Naive thymus-derived CD4-positive, alpha-beta T cell (primary cell): ENCODE measurements at regions of chr4 and their contacts with region 1.

Region 1: DNA sequence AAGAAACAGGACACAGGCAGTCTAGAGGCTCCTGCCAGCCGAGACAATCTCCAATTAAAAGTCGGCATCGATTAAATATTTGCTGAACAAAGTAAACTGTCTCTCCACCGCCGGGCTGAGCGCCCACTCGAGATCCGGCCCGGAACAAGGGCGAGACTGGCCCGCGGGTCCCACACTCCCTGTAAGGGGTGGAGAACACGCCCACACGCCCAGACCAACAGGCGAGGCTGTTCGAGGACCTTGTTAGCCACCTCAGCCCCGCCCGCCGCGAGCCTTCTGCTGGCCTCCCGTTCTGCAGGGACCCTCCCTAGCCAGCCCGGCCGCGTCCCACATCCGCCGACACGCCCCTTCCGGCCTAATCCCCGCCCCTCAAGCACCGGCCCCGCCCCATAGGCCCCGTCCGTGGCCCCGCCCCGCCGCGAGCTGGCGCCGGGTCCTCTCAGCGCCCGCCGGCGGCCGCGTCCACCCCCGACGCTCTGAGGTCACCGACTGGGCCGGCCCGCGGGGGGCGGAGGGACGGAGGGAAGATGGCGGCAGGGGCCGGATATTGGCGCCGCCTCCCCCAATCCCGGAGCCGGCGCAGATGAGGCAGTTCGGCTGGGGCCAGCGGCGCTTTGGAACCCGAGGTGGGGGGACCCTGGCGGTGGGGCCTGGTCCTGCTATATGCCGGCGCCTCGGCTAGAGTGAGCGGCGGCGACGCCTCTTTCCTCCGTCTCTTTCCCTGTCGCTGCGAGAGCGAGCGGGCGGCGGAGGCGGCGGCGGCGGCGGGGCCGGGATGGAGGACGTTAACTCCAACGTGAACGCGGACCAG is at the start of gene SLAIN2:
- DNase-seq: peak; percentile 91 to 100 (median 96)
- ATAC-seq: peak; percentile 93
- H3K4me3 ChIP-seq: peak within 1 kb of the TSS; percentile 76
- H3K4me3 Mint-ChIP-seq: peak within 1 kb of the TSS; percentile 81 to 99 (median 96)
- H3K27ac ChIP-seq: peak within 1 kb of the TSS; percentile 91
- H3K27ac Mint-ChIP-seq: peak within 1 kb of the TSS; percentile 91 to 98 (median 96)
- H3K4me1 ChIP-seq: peaks cover 17 to 20% of the 10 kb centered on the region in 2 donors
- H3K4me1 Mint-ChIP-seq: peaks cover 40 to 54% (median 45%) of the 10 kb centered on the region in 7 donors
- H3K27me3 ChIP-seq: no peaks in the 10 kb centered on the region
- H3K27me3 Mint-ChIP-seq: no peaks in the 10 kb centered on the region
- total RNA-seq, gene SLAIN2: 53.2 to 87.5 (median 77.2) TPM

Region 2: GRCh38 chr4:47463235-47463956 is 877.8 kb before region 1 on chr4 and contains the start of gene COMMD8:
- CTCF ChIA-PET with region 1: interaction called, 3 read pairs
- POLR2A ChIA-PET with region 1: no interaction called
- intact Hi-C with region 1: loop called (anchors 1 kb)
- DNase-seq: peak; percentile 91 to 97 (median 95)
- ATAC-seq: peak; percentile 93
- H3K4me3 ChIP-seq: peak within 1 kb of the TSS; percentile 82
- H3K4me3 Mint-ChIP-seq: peak within 1 kb of the TSS; percentile 77 to 93 (median 90)
- H3K27ac ChIP-seq: peak within 1 kb of the TSS; percentile 74
- H3K27ac Mint-ChIP-seq: peak within 1 kb of the TSS; percentile 76 to 97 (median 95)
- H3K4me1 ChIP-seq: peaks cover 9 to 17% of the 10 kb centered on the region in 2 donors
- H3K4me1 Mint-ChIP-seq: peaks cover 20 to 48% (median 38%) of the 10 kb centered on the region in 7 donors
- H3K27me3 ChIP-seq: no peaks in the 10 kb centered on the region
- H3K27me3 Mint-ChIP-seq: no peaks in the 10 kb centered on the region
- total RNA-seq, gene COMMD8: 8.4 to 19.3 (median 16.7) TPM

Region 3: GRCh38 chr4:48016141-48017103 is 324.7 kb before region 1 on chr4 and contains the starts of genes CNGA1 and NIPAL1:
- CTCF ChIA-PET with region 1: no interaction called
- POLR2A ChIA-PET with region 1: no interaction called
- intact Hi-C with region 1: loop called (anchors 5 kb)
- DNase-seq: peak; percentile 56 to 79 (median 65)
- ATAC-seq: peak; percentile 96
- H3K4me3 ChIP-seq: peak within 1 kb of the TSS; percentile 75
- H3K4me3 Mint-ChIP-seq: peak within 1 kb of the TSS; percentile 78 to 95 (median 86)
- H3K27ac ChIP-seq: peak within 1 kb of the TSS; percentile 17
- H3K27ac Mint-ChIP-seq: peak within 1 kb of the TSS in 5 of 9 donors; percentile 7 to 91 (median 50)
- H3K4me1 ChIP-seq: peaks cover 0 to 8% of the 10 kb centered on the region in 2 donors
- H3K4me1 Mint-ChIP-seq: peaks cover 6 to 12% (median 10%) of the 10 kb centered on the region in 7 donors
- H3K27me3 ChIP-seq: no peaks in the 10 kb centered on the region
- H3K27me3 Mint-ChIP-seq: peaks cover 3 to 32% (median 11%) of the 10 kb centered on the region in 5 donors
- total RNA-seq, gene CNGA1: not detected
- total RNA-seq, gene NIPAL1: 0.45 to 3.3 (median 1.9) TPM in 4 of 5 experiments, not detected in the other

Region 4: DNA sequence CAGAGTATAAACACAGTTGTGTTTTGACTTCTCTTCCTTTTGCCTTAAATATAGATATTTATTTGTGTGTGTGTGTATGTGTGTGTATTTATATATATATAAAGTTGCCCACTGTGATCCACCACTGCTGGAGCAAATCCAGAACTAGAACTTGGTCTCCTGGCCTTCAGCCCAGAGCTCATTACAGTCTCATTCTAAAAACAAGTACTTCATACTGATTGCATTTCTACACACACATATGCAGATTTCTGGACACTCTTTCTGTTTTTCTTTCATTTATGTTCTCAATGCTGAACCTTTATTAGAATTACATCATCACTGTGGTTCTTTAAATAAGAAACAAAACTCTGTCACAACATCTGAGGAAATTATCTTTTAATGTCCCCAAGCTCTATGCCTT is 207.5 kb before region 1 on chr4:
- CTCF ChIA-PET with region 1: interaction called, 3 read pairs
- POLR2A ChIA-PET with region 1: interaction called, 10 read pairs
- intact Hi-C with region 1: loop called (anchors 1 to 2 kb)
- DNase-seq: no peak
- ATAC-seq: no peak
- H3K4me3 ChIP-seq: peak overlapping the region; percentile 61
- H3K4me3 Mint-ChIP-seq: peak overlapping the region in 9 of 10 donors; percentile 91 to 99 (median 94)
- H3K27ac ChIP-seq: peak overlapping the region; percentile 79
- H3K27ac Mint-ChIP-seq: peak overlapping the region in 7 of 9 donors; percentile 82 to 97 (median 93)
- H3K4me1 ChIP-seq: peaks cover 65 to 68% of the 10 kb centered on the region in 2 donors
- H3K4me1 Mint-ChIP-seq: peaks cover 47 to 83% (median 75%) of the 10 kb centered on the region in 7 donors
- H3K27me3 ChIP-seq: no peaks in the 10 kb centered on the region
- H3K27me3 Mint-ChIP-seq: no peaks in the 10 kb centered on the region

Region 5: DNA sequence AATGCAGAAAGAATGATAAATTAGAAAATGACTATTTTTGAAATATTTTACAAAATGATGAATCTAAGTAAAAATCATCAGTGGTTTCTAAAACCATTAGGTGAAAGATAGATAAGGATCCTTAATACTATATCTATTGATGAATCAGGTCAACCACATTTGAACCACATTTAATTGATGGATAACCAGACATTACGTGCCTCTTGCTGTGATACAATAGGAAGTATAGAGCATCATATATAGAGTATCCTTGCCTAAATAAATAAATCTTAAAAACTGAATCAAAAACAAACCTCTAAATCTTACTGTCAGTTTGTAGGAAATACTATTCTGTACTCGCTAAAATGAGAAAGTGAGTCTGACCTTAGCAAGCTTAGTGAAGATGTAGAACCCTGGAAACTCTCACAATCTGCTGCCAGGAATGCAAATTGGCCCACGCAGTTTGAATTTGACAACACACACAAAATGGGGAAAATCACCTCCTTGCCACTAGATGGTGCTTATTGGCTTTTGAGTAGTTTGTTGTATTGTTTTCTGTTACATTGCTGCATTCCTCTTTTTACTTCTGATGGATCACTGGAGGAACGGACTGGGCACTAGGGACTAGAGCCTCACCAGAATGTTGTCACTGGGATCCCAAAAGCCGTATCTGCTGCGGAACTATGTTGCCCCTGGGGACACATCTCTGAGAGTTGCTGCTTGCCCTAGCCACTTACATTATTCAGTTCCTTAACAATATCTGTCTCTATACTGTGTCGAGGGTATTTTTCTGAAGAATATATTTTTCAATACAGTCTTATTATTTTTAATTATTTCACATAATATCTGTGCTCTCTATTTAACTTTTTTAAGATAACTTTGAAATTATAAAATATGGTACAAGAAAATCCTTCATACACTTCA is 25.2 kb before region 1 on chr4:
- CTCF ChIA-PET with region 1: no interaction called
- POLR2A ChIA-PET with region 1: no interaction called
- intact Hi-C with region 1: loop called (anchors 1 kb)
- DNase-seq: peak in 7 of 9 donors; percentile 13 to 53 (median 33)
- ATAC-seq: peak; percentile 61
- H3K4me3 ChIP-seq: no peak overlapping the region
- H3K4me3 Mint-ChIP-seq: no peak overlapping the region
- H3K27ac ChIP-seq: no peak overlapping the region
- H3K27ac Mint-ChIP-seq: peak overlapping the region in 1 of 9 donors; percentile 46
- H3K4me1 ChIP-seq: no peaks in the 10 kb centered on the region
- H3K4me1 Mint-ChIP-seq: peaks cover 0 to 5% (median 0%) of the 10 kb centered on the region in 7 donors
- H3K27me3 ChIP-seq: no peaks in the 10 kb centered on the region
- H3K27me3 Mint-ChIP-seq: peaks cover 0 to 6% (median 0%) of the 10 kb centered on the region in 5 donors

Region 6: GRCh38 chr4:48429709-48430474 is 88.7 kb after region 1 on chr4:
- CTCF ChIA-PET with region 1: no interaction called
- POLR2A ChIA-PET with region 1: no interaction called
- intact Hi-C with region 1: loop called in 1 of 2 experiments (anchors 2 kb)
- DNase-seq: no peak
- ATAC-seq: no peak
- H3K4me3 ChIP-seq: no peak overlapping the region
- H3K4me3 Mint-ChIP-seq: peak overlapping the region in 1 of 10 donors; percentile 57
- H3K27ac ChIP-seq: no peak overlapping the region
- H3K27ac Mint-ChIP-seq: peak overlapping the region in 1 of 9 donors; percentile 63
- H3K4me1 ChIP-seq: peaks cover 0 to 16% of the 10 kb centered on the region in 2 donors
- H3K4me1 Mint-ChIP-seq: peaks cover 26 to 56% (median 41%) of the 10 kb centered on the region in 7 donors
- H3K27me3 ChIP-seq: no peaks in the 10 kb centered on the region
- H3K27me3 Mint-ChIP-seq: peaks cover 0 to 3% (median 0%) of the 10 kb centered on the region in 5 donors

Region 7: DNA sequence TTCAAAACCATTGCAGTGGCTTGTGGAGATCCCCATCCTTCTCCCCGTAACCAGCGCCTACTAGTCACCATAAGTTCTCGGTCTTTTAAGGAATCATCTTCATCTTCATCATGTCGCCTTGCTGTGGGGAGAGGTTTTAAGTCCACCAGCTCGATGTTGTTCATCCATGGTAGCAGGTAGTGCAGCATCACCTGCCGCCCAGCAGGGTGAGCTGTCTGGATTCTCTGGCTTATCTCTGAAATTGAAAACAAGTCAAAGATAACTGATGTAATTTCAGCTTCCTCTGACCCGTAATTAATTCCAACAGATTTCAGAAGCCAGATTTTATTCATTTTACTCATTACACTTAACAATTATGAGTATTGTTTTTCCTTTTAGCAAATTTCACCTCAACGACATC is 216.3 kb after region 1 on chr4:
- CTCF ChIA-PET with region 1: no interaction called
- POLR2A ChIA-PET with region 1: no interaction called
- intact Hi-C with region 1: no loop called
- DNase-seq: no peak
- ATAC-seq: no peak
- H3K4me3 ChIP-seq: no peak overlapping the region
- H3K4me3 Mint-ChIP-seq: no peak overlapping the region
- H3K27ac ChIP-seq: no peak overlapping the region
- H3K27ac Mint-ChIP-seq: no peak overlapping the region
- H3K4me1 ChIP-seq: no peaks in the 10 kb centered on the region
- H3K4me1 Mint-ChIP-seq: peaks cover 0 to 4% (median 0%) of the 10 kb centered on the region in 7 donors
- H3K27me3 ChIP-seq: no peaks in the 10 kb centered on the region
- H3K27me3 Mint-ChIP-seq: no peaks in the 10 kb centered on the region

Region 8: DNA sequence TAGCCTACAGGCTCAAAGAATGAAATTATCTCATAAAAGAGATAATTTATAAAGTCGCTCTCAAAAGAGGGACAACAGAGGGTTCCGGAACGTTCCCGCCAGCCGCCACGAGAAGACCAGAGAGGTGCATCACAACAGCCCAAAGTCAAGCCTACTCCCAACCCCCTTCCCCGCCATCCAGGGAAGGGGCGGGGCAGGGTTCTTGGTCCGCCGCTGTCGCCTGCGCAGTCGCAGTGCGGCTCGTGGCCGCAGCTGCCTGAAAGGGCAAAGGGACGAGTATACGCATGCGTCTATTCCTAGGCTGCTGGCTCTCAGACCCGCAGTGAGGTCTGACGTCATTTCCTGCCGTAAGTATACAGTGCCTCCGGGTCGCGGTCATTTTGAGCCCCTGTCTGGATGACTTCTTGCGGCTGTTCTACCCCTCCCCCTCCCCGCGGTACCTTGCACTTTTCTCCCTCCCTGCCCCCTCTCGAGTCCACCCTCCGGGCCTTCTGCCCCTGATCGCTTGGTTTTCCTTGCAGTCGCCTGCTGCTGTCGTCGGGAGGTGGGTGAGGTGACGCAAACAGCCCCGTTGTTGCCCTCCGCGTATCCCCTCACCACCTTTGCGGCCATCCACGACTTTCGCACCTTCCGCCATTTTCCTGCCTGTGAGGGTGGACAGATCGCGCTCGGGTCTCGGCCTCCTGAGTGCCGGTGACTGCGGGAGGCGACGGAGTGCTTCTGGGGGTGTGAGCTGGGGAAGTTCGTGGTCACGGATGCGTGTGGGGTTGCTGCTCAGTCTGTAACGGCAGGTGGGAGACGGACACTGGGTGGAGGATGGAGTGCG is 489.7 kb after region 1 on chr4 and contains the start of gene OCIAD1:
- CTCF ChIA-PET with region 1: no interaction called
- POLR2A ChIA-PET with region 1: no interaction called
- intact Hi-C with region 1: loop called (anchors 1 kb)
- DNase-seq: peak; percentile 80 to 98 (median 93)
- ATAC-seq: peak; percentile 98
- H3K4me3 ChIP-seq: peak within 1 kb of the TSS; percentile 98
- H3K4me3 Mint-ChIP-seq: peak within 1 kb of the TSS; percentile 96 to 100 (median 100)
- H3K27ac ChIP-seq: peak within 1 kb of the TSS; percentile 91
- H3K27ac Mint-ChIP-seq: peak within 1 kb of the TSS; percentile 98 to 100 (median 100)
- H3K4me1 ChIP-seq: peaks cover 10 to 12% of the 10 kb centered on the region in 2 donors
- H3K4me1 Mint-ChIP-seq: peaks cover 10 to 44% (median 36%) of the 10 kb centered on the region in 7 donors
- H3K27me3 ChIP-seq: no peaks in the 10 kb centered on the region
- H3K27me3 Mint-ChIP-seq: peaks cover 0 to 4% (median 4%) of the 10 kb centered on the region in 5 donors
- total RNA-seq, gene OCIAD1: 85.6 to 128 (median 102) TPM